Prostate gland (tissue), 2 donors: ENCODE measurements at regions of chr2 and their contacts with region 1.

Region 1: GRCh38 chr2:231297108-231297908 is 98.2 kb upstream of the B3GNT7 start:
- DNase-seq: peak; percentile 31
- H3K4me3 ChIP-seq: no peak overlapping the region
- H3K27ac ChIP-seq: no peak overlapping the region
- H3K4me1 ChIP-seq: peaks cover 2% of the 10 kb centered on the region
- H3K27me3 ChIP-seq: no peaks in the 10 kb centered on the region
- CTCF ChIP-seq: peak in 3 of 4 experiments; percentile 35 to 60 (median 54)
- POLR2A ChIP-seq: no peak

Region 2: GRCh38 chr2:230987137-230988020 is 309.9 kb before region 1 on chr2:
- intact Hi-C with region 1: no loop called
- DNase-seq: peak; percentile 60
- H3K4me3 ChIP-seq: peak overlapping the region; percentile 10 to 24
- H3K27ac ChIP-seq: no peak overlapping the region
- H3K4me1 ChIP-seq: no peaks in the 10 kb centered on the region
- H3K27me3 ChIP-seq: peaks cover 9% of the 10 kb centered on the region
- CTCF ChIP-seq: peak; percentile 89 to 97 (median 92)
- POLR2A ChIP-seq: no peak

Region 3: GRCh38 chr2:231394211-231395141 is 97.2 kb after region 1 on chr2:
- intact Hi-C with region 1: loop called (anchors 5 kb)
- DNase-seq: no peak
- H3K4me3 ChIP-seq: no peak overlapping the region
- H3K27ac ChIP-seq: no peak overlapping the region
- H3K4me1 ChIP-seq: peaks cover 3% of the 10 kb centered on the region
- H3K27me3 ChIP-seq: no peaks in the 10 kb centered on the region
- CTCF ChIP-seq: peak in 1 of 4 experiments; percentile 18
- POLR2A ChIP-seq: no peak

Region 4: GRCh38 chr2:231411831-231412617 is 114.7 kb after region 1 on chr2:
- intact Hi-C with region 1: loop called (anchors 5 kb)
- DNase-seq: peak; percentile 77
- H3K4me3 ChIP-seq: peak overlapping the region; percentile 49 to 52
- H3K27ac ChIP-seq: peak overlapping the region; percentile 29 to 60
- H3K4me1 ChIP-seq: no peaks in the 10 kb centered on the region
- H3K27me3 ChIP-seq: no peaks in the 10 kb centered on the region
- CTCF ChIP-seq: peak; percentile 50 to 85 (median 78)
- POLR2A ChIP-seq: no peak